ENCODE measurements at regions of chr12 and their contacts with region 1.

Region 1: GRCh38 chr12:14384783-14385638 is 19.5 kb downstream of the ATF7IP start:
- DNase-seq: peak; percentile 81 to 87 (median 86)
- H3K4me3 ChIP-seq: peak overlapping the region in 1 of 2 donors; percentile 41
- H3K4me3 Mint-ChIP-seq: peak overlapping the region; percentile 64 to 92 (median 78)
- H3K27ac ChIP-seq: peak overlapping the region; percentile 74
- H3K27ac Mint-ChIP-seq: peak overlapping the region; percentile 93 to 97 (median 94)
- H3K4me1 ChIP-seq: peaks cover 73% of the 10 kb centered on the region
- H3K4me1 Mint-ChIP-seq: peaks cover 42 to 67% (median 57%) of the 10 kb centered on the region in 4 donors
- H3K27me3 ChIP-seq: no peaks in the 10 kb centered on the region
- H3K27me3 Mint-ChIP-seq: no peaks in the 10 kb centered on the region

Region 2: GRCh38 chr12:12724661-12725545 is 1660.1 kb before region 1 on chr12:
- CTCF ChIA-PET with region 1: no interaction called
- POLR2A ChIA-PET with region 1: no interaction called
- intact Hi-C with region 1: loop called (anchors 10 kb)
- DNase-seq: peak; percentile 93 to 97 (median 96)
- H3K4me3 ChIP-seq: peak overlapping the region in 1 of 2 donors; percentile 80
- H3K4me3 Mint-ChIP-seq: peak overlapping the region; percentile 89 to 96 (median 92)
- H3K27ac ChIP-seq: peak overlapping the region; percentile 95
- H3K27ac Mint-ChIP-seq: peak overlapping the region; percentile 95 to 99 (median 97)
- H3K4me1 ChIP-seq: peaks cover 56% of the 10 kb centered on the region
- H3K4me1 Mint-ChIP-seq: peaks cover 37 to 72% (median 43%) of the 10 kb centered on the region in 4 donors
- H3K27me3 ChIP-seq: no peaks in the 10 kb centered on the region
- H3K27me3 Mint-ChIP-seq: peaks cover 0 to 1% of the 10 kb centered on the region in 2 donors

Region 3: DNA sequence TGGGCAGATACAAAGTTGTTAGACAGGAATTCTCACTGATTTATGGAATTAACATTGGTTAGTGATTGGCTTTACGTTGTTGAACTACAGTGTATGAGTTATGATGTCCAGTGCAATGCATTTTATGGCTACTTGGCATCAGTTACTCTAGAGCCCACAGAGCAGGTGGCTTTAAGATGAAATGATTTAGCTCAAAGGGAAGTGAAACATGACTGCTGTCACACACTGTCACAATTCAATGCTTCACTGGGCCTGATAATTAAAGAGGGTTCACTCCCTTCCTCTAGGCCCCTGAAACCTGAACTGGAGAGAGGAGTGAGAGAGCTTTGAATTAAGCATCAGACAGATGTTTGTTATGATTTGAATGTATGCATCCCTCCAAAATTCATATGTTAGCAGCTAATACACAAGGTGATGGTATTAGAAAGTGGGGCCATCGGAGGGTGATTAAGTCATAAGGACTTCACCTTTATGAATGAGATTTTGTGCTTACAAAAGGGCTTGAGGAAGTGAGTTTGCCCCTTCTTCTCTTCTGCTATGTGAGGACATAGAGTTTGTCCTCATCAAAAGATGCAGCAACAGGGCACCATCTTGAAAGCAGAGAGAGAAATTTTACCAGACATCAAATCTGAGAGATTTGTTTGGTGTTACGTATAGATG is 227.8 kb before region 1 on chr12:
- CTCF ChIA-PET with region 1: no interaction called
- POLR2A ChIA-PET with region 1: no interaction called
- intact Hi-C with region 1: no loop called
- DNase-seq: no peak
- H3K4me3 ChIP-seq: no peak overlapping the region
- H3K4me3 Mint-ChIP-seq: no peak overlapping the region
- H3K27ac ChIP-seq: no peak overlapping the region
- H3K27ac Mint-ChIP-seq: no peak overlapping the region
- H3K4me1 ChIP-seq: no peaks in the 10 kb centered on the region
- H3K4me1 Mint-ChIP-seq: no peaks in the 10 kb centered on the region
- H3K27me3 ChIP-seq: no peaks in the 10 kb centered on the region
- H3K27me3 Mint-ChIP-seq: peaks cover 0 to 16% of the 10 kb centered on the region in 2 donors

Region 4: GRCh38 chr12:14365294-14366208 is 19.5 kb before region 1 on chr12 and contains the start of gene ATF7IP:
- CTCF ChIA-PET with region 1: interaction called, 66 read pairs
- POLR2A ChIA-PET with region 1: interaction called, 228 read pairs
- intact Hi-C with region 1: loop called (anchors 1 kb)
- DNase-seq: peak; percentile 95 to 97 (median 97)
- H3K4me3 ChIP-seq: peak within 1 kb of the TSS; percentile 45 to 81
- H3K4me3 Mint-ChIP-seq: peak within 1 kb of the TSS; percentile 82 to 99 (median 92)
- H3K27ac ChIP-seq: peak within 1 kb of the TSS; percentile 90
- H3K27ac Mint-ChIP-seq: peak within 1 kb of the TSS; percentile 85 to 99 (median 96)
- H3K4me1 ChIP-seq: peaks cover 34% of the 10 kb centered on the region
- H3K4me1 Mint-ChIP-seq: peaks cover 11 to 55% (median 29%) of the 10 kb centered on the region in 4 donors
- H3K27me3 ChIP-seq: no peaks in the 10 kb centered on the region
- H3K27me3 Mint-ChIP-seq: no peaks in the 10 kb centered on the region
- total RNA-seq, gene ATF7IP: 209 to 223 TPM

Region 5: DNA sequence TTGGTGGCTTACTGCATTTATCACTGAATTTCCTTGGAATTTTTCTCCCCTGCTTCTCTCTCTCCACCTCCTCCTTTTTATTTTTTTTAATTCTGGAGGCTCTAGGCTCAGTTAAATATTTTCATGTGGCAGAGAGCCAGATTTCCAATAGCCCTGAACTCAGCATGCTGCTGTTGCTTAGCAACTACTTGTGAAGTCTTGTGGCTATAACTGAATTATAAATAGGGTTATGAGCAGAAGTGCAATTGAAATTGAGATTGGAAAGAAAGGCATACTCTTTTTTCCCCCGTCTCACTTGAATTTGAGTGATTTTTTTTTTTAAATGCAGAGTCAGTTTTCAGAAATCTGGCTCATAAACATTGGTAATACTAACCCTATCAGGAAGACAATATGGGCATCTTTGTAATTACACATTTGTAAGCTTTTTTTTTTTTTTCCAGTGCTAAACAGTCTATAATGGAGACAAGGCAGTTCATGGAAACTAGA is 18.7 kb after region 1 on chr12:
- CTCF ChIA-PET with region 1: interaction called, 6 read pairs
- POLR2A ChIA-PET with region 1: interaction called, 25 read pairs
- intact Hi-C with region 1: loop called (anchors 2 kb)
- DNase-seq: peak; percentile 55 to 72 (median 66)
- H3K4me3 ChIP-seq: peak overlapping the region in 1 of 2 donors; percentile 17
- H3K4me3 Mint-ChIP-seq: peak overlapping the region; percentile 40 to 88 (median 78)
- H3K27ac ChIP-seq: peak overlapping the region; percentile 33
- H3K27ac Mint-ChIP-seq: peak overlapping the region; percentile 86 to 98 (median 93)
- H3K4me1 ChIP-seq: peaks cover 98% of the 10 kb centered on the region
- H3K4me1 Mint-ChIP-seq: peaks cover 47 to 82% (median 68%) of the 10 kb centered on the region in 4 donors
- H3K27me3 ChIP-seq: no peaks in the 10 kb centered on the region
- H3K27me3 Mint-ChIP-seq: no peaks in the 10 kb centered on the region

Region 6: DNA sequence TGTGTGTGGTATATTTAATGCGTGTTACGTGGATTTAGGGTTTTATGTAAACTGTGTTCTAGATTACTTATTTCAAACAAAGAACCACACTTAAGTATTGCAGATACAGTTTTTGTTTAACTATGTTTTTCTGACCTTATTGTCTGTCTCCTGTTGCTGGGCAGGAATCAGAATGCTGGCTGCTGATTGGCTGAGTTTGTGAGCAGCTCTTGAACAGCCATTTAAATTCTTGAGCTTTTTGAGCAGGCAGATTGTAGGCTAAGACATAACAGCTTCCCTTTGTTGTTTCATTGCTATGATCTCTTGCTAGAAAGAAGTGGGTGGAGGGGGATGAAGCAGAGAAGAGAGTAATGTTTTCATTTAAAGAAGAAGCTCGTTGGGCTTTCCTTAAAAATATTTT is 32.7 kb after region 1 on chr12:
- CTCF ChIA-PET with region 1: interaction called, 22 read pairs
- POLR2A ChIA-PET with region 1: interaction called, 91 read pairs
- intact Hi-C with region 1: no loop called
- DNase-seq: peak; percentile 70 to 86 (median 79)
- H3K4me3 ChIP-seq: no peak overlapping the region
- H3K4me3 Mint-ChIP-seq: peak overlapping the region; percentile 72 to 88 (median 84)
- H3K27ac ChIP-seq: peak overlapping the region; percentile 34
- H3K27ac Mint-ChIP-seq: peak overlapping the region; percentile 66 to 95 (median 86)
- H3K4me1 ChIP-seq: peaks cover 73% of the 10 kb centered on the region
- H3K4me1 Mint-ChIP-seq: peaks cover 46 to 73% (median 59%) of the 10 kb centered on the region in 4 donors
- H3K27me3 ChIP-seq: no peaks in the 10 kb centered on the region
- H3K27me3 Mint-ChIP-seq: no peaks in the 10 kb centered on the region